MCF 10A (cell line): ENCODE measurements at regions of chr2 and their contacts with region 1.

Region 1: DNA sequence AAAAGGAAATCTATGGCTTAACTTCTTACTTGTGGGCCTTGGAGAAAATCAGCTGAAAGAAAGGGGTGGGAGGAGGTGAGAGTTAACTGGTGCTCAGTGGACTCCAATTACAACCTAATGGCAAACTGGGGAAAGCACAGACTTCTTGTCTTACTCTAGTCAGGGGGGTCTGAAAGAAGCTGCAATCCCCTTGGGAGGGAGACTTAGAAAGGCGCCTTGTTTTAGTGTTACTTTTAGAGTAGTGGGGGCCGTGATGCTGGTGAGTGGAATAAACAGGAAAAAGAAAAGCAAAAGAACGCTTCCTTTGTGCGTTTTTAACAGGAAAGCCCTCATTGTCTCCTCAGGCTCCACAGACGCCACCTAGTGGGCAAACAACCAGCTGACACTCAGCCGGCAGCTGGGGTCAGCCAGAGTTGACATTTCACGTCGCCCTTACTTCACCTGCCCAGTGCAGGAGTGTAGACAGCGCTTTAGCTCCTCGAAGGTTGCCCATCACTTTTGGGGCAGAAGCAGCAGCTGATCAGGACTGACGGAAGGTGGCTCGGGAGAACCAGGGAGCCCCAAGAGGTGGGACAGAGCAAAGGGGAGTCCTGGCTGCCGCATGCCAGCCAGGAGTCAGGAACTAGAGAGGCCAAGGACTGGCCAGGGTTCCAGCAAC is 55.9 kb upstream of the GORASP2 start:
- DNase-seq: peak; percentile 79
- H3K4me3 Mint-ChIP-seq: peak overlapping the region; percentile 70
- H3K27ac Mint-ChIP-seq: no peak overlapping the region
- H3K4me1 Mint-ChIP-seq: peaks cover 15% of the 10 kb centered on the region
- H3K27me3 Mint-ChIP-seq: no peaks in the 10 kb centered on the region
- CTCF ChIP-seq: peak; percentile 76

Region 2: GRCh38 chr2:170369894-170370293 is 503.3 kb before region 1 on chr2:
- CTCF ChIA-PET with region 1: interaction called, 10 read pairs
- POLR2A ChIA-PET with region 1: no interaction called
- intact Hi-C with region 1: loop called (anchors 5 kb)
- DNase-seq: peak; percentile 32
- H3K4me3 Mint-ChIP-seq: no peak overlapping the region
- H3K27ac Mint-ChIP-seq: no peak overlapping the region
- H3K4me1 Mint-ChIP-seq: peaks cover 8% of the 10 kb centered on the region
- H3K27me3 Mint-ChIP-seq: peaks cover 49% of the 10 kb centered on the region
- CTCF ChIP-seq: no peak

Region 3: DNA sequence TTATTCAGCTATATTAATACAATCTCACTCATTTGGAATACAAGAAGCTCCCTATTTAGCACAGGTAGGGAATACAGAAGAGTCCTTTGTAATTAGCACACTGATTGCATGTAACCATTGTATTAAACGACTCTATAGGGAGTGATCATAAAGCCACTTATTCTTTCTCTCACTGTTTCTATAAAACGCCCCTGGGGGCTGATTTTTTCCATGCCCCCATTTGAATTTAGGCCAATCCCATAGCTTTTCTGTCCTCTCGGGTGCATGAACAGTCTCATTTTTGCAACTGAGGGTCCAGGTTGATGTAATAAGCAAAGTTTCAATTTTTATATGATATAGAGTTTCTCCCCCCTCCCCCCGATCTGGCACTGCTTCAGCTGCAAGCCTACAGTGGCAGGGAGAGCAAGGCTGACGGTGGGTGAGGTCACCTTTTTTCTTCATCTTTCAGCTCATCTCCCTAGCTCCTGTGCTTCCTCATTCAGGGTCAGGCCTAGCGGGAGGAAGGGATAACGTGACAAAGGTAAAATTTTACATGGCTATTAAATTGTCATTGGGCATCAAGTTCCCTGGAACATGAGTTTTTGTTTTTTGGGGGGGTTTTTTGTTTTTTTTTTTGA is 10.8 kb before region 1 on chr2:
- CTCF ChIA-PET with region 1: interaction called, 24 read pairs
- POLR2A ChIA-PET with region 1: interaction called, 3 read pairs
- intact Hi-C with region 1: no loop called
- DNase-seq: no peak
- H3K4me3 Mint-ChIP-seq: no peak overlapping the region
- H3K27ac Mint-ChIP-seq: no peak overlapping the region
- H3K4me1 Mint-ChIP-seq: no peaks in the 10 kb centered on the region
- H3K27me3 Mint-ChIP-seq: no peaks in the 10 kb centered on the region
- CTCF ChIP-seq: no peak

Region 4: DNA sequence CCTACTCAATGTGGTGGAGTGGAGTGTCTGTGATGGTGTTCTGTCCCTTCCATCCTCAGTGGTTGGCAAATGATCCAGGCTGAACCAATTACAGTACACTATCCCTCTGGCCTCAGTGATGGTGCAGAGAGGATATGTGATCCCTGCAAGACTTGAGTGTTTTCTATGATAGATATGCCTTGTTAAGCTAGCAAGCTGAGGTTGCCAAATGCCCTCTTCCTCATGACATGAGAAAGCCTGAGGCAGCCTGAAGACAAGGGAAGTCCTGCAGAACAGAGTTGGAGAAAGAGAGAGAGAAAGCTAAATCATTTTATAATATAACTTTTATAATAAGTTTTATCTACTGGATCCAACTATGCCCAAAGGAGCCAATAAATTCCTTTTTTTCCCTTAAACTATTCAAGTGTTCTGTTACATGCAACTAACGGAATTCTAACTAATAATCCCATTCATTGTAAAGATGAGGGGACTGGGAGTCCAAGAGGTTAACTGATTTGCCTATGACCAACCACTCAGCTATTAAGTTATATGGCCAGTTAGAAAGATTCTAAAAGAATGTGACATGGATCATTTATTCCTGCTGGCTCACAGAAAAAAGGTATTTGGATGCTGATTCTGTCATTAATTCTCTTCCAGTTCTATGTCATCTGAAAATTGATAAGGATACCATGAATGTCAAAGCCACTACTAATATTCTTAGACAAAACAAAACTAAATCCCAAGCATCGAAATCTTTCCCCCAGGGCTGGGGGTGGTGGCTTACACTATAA is 14.5 kb after region 1 on chr2:
- CTCF ChIA-PET with region 1: interaction called, 11 read pairs
- POLR2A ChIA-PET with region 1: interaction called, 3 read pairs
- intact Hi-C with region 1: no loop called
- DNase-seq: no peak
- H3K4me3 Mint-ChIP-seq: no peak overlapping the region
- H3K27ac Mint-ChIP-seq: no peak overlapping the region
- H3K4me1 Mint-ChIP-seq: peaks cover 20% of the 10 kb centered on the region
- H3K27me3 Mint-ChIP-seq: peaks cover 4% of the 10 kb centered on the region
- CTCF ChIP-seq: no peak

Region 5: DNA sequence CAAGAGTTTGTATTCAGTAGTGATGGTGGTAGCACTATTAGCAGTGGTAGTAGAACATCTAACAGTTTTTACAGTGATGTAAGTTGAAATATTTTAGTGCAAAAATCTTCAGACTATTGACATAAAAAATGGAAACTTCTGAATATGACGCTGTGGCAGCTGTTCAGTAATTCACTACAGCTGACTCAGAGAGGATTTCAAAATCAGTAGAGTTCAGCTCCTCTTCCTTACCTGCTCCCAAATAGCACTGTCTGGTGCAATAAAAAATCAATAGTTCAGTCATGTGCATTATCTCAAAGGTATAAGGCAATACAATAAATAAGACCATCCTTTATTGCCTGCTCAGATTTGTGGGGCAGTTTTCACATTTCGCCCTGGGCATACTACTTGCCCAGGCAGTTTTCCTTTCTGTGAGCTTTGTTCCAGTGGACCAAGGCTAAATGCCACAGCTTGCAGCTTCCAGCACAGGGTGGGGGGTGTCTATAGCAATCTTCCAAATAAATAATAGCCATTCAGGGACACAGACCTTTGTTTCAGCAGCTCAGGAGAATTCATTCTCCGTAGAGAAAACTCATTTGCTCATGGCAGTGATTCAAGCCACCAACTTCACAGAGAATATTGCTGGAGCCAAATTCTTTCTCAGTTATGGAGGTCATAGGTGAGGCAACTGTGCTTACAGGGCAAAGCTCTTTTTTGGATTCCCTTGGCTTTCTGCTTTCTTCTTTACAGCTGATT is 22.0 kb after region 1 on chr2:
- CTCF ChIA-PET with region 1: interaction called, 22 read pairs
- POLR2A ChIA-PET with region 1: interaction called, 4 read pairs
- intact Hi-C with region 1: no loop called
- DNase-seq: peak; percentile 25
- H3K4me3 Mint-ChIP-seq: no peak overlapping the region
- H3K27ac Mint-ChIP-seq: no peak overlapping the region
- H3K4me1 Mint-ChIP-seq: peaks cover 8% of the 10 kb centered on the region
- H3K27me3 Mint-ChIP-seq: no peaks in the 10 kb centered on the region
- CTCF ChIP-seq: no peak